MCF 10A (cell line): ENCODE measurements at regions of chr13 and their contacts with region 1.

Region 1: DNA sequence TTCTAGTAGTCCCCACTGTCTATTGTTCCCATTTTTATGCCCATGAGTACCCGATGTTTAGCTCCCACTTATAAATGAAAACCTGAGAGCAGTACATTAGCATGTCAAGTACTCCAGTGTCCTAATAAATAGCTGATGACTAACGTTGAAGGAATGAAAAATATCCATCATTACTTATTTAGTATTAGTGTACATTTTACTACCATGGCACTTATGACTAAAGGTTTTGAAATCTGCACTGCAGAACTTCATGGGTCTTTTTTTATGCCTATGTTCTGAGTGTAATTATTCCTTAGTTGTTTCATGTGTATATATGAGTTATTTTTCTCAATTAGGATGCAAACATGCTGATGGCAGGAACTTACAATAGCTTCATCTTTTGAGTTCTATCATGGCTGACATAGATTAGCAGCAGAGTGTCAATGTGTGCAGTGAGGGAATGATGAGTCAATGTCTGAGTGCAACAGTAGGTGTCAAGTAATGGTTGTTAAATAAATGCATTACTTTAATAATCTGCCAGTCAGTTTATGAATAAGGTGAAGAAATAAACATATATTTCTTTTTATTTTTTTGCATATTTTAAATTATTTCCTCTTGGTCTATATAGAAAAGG is 188.4 kb downstream of the ITGBL1 start:
- DNase-seq: peak; percentile 35
- H3K4me3 Mint-ChIP-seq: peak overlapping the region; percentile 13
- H3K27ac Mint-ChIP-seq: peak overlapping the region; percentile 81
- H3K4me1 Mint-ChIP-seq: peaks cover 14% of the 10 kb centered on the region
- H3K27me3 Mint-ChIP-seq: no peaks in the 10 kb centered on the region
- CTCF ChIP-seq: no peak

Region 2: GRCh38 chr13:101202590-101202989 is 438.3 kb before region 1 on chr13:
- CTCF ChIA-PET with region 1: no interaction called
- POLR2A ChIA-PET with region 1: no interaction called
- intact Hi-C with region 1: no loop called
- DNase-seq: no peak
- H3K4me3 Mint-ChIP-seq: no peak overlapping the region
- H3K27ac Mint-ChIP-seq: no peak overlapping the region
- H3K4me1 Mint-ChIP-seq: no peaks in the 10 kb centered on the region
- H3K27me3 Mint-ChIP-seq: no peaks in the 10 kb centered on the region
- CTCF ChIP-seq: no peak

Region 3: GRCh38 chr13:101618440-101619187 is 22.3 kb before region 1 on chr13:
- CTCF ChIA-PET with region 1: no interaction called
- POLR2A ChIA-PET with region 1: interaction called, 6 read pairs
- intact Hi-C with region 1: loop called (anchors 1 kb)
- DNase-seq: no peak
- H3K4me3 Mint-ChIP-seq: no peak overlapping the region
- H3K27ac Mint-ChIP-seq: no peak overlapping the region
- H3K4me1 Mint-ChIP-seq: peaks cover 17% of the 10 kb centered on the region
- H3K27me3 Mint-ChIP-seq: no peaks in the 10 kb centered on the region
- CTCF ChIP-seq: no peak

Region 4: DNA sequence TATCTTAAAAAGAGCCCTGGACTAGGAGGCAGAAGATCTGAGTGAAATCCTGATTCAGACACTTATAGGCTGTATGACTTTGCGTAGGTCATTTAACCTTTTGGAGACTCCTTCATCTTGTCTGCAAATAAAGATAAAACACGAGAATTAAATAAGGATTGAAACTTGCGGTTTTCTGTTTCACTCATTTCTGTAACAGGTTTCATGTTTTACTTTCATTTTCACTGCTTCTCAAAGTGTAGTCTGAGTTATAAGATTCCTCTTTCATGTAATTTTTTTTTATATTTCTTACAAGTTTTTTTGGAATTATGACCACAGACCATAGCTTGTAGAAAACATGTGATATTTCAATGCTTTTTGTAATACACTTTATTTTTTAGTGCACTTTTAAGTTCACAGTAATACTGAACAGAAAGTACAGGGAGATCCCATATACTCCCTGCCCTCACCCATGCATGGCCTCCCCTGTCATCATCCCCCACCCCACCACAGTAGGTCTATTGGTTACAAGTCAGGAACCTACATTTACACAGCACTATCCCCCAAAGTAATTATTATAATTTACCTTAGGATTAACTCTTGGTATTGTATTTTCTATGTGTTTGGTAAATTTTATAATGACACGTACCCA is 13.9 kb before region 1 on chr13:
- CTCF ChIA-PET with region 1: no interaction called
- POLR2A ChIA-PET with region 1: interaction called, 9 read pairs
- intact Hi-C with region 1: loop called (anchors 2 kb)
- DNase-seq: no peak
- H3K4me3 Mint-ChIP-seq: no peak overlapping the region
- H3K27ac Mint-ChIP-seq: peak overlapping the region; percentile 25
- H3K4me1 Mint-ChIP-seq: peaks cover 19% of the 10 kb centered on the region
- H3K27me3 Mint-ChIP-seq: no peaks in the 10 kb centered on the region
- CTCF ChIP-seq: no peak